CD4-positive, alpha-beta T cell (primary cell): ENCODE measurements at regions of chr22 and their contacts with region 1.

Region 1: GRCh38 chr22:29668673-29669072 is 51.1 kb upstream of the CABP7 start:
- DNase-seq: no peak
- ATAC-seq: no peak
- H3K4me3 ChIP-seq: no peak overlapping the region
- H3K4me3 Mint-ChIP-seq: no peak overlapping the region
- H3K27ac ChIP-seq: no peak overlapping the region
- H3K27ac Mint-ChIP-seq: no peak overlapping the region
- H3K4me1 ChIP-seq: no peaks in the 10 kb centered on the region
- H3K4me1 Mint-ChIP-seq: no peaks in the 10 kb centered on the region
- H3K27me3 ChIP-seq: no peaks in the 10 kb centered on the region
- H3K27me3 Mint-ChIP-seq: no peaks in the 10 kb centered on the region
- CTCF ChIP-seq: no peak

Region 2: GRCh38 chr22:30538280-30538679 is 869.6 kb after region 1 on chr22:
- CTCF ChIA-PET with region 1: no interaction called
- POLR2A ChIA-PET with region 1: no interaction called
- intact Hi-C with region 1: loop called in 1 of 2 experiments (anchors 5 kb)
- DNase-seq: no peak
- ATAC-seq: no peak
- H3K4me3 ChIP-seq: no peak overlapping the region
- H3K4me3 Mint-ChIP-seq: no peak overlapping the region
- H3K27ac ChIP-seq: no peak overlapping the region
- H3K27ac Mint-ChIP-seq: no peak overlapping the region
- H3K4me1 ChIP-seq: peaks cover 7% of the 10 kb centered on the region
- H3K4me1 Mint-ChIP-seq: no peaks in the 10 kb centered on the region
- H3K27me3 ChIP-seq: peaks cover 18 to 26% of the 10 kb centered on the region in 2 experiments
- H3K27me3 Mint-ChIP-seq: peaks cover 37% of the 10 kb centered on the region
- CTCF ChIP-seq: no peak